HepG2 (cell line): ENCODE measurements at regions of chr1 and their contacts with region 1.

Region 1: DNA sequence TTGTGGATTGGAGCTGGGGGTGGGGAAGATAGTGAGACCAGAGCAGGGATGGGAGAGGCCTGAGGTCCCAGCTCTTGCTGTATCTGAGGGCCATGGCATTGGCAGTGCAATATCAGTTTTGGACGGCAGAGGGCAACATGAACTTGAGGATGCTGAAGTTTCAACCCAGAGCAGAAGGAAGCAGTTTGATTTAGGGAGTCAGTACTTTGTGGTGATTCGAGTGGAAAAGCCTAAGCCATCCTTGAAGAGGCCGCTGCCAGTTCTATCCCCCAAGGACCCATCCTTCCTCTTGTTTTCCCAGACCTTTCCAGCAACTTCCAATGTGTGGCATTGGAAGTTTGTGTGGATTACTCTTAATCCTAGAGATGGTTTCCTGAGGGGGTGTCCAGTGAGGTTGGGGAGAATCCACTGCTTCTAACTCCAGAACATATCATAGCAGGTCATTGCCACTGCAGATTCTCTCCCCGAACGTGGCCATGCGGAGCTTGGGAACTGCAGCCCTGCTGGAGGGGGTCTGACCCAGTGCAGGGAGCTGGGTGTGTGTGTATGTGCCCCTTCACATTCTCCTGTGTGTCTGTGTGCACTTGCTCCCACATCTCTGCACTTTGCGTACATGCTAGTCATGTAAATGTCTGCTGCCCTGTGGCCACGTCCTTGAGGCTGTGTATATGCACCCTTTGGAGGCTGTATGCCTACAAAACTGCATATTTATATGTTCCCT is 24.1 kb downstream of the SLC26A9 start:
- DNase-seq: peak; percentile 52
- ATAC-seq: peak; percentile 85
- H3K4me3 ChIP-seq: no peak overlapping the region
- H3K27ac ChIP-seq: no peak overlapping the region
- H3K4me1 ChIP-seq: 0 out of 2 replicates have a peak, but pooled peaks cover 4% of the 10 kb centered on the region
- H3K27me3 ChIP-seq: peaks cover 2 to 3% of the 10 kb centered on the region in 2 experiments; a peak in 2 of 5 replicates
- CTCF ChIP-seq: peak; percentile 91
- EP300 ChIP-seq: no peak
- POLR2A ChIP-seq: no peak
- RAD21 ChIP-seq: peak; percentile 82

Region 2: GRCh38 chr1:205977402-205978014 is 58.3 kb after region 1 on chr1:
- CTCF ChIA-PET with region 1: interaction called, 59 read pairs
- POLR2A ChIA-PET with region 1: interaction called, 3 read pairs
- in situ Hi-C with region 1: no loop called
- intact Hi-C with region 1: loop called (anchors 1 kb)
- DNase-seq: peak; percentile 67
- ATAC-seq: peak; percentile 89
- H3K4me3 ChIP-seq: no peak overlapping the region
- H3K27ac ChIP-seq: no peak overlapping the region
- H3K4me1 ChIP-seq: peaks cover 13% of the 10 kb centered on the region
- H3K27me3 ChIP-seq: peaks cover 3 to 15% of the 10 kb centered on the region in 2 experiments; a peak in 3 of 5 replicates
- CTCF ChIP-seq: peak; percentile 93
- EP300 ChIP-seq: no peak
- POLR2A ChIP-seq: no peak
- RAD21 ChIP-seq: peak; percentile 88

Region 3: DNA sequence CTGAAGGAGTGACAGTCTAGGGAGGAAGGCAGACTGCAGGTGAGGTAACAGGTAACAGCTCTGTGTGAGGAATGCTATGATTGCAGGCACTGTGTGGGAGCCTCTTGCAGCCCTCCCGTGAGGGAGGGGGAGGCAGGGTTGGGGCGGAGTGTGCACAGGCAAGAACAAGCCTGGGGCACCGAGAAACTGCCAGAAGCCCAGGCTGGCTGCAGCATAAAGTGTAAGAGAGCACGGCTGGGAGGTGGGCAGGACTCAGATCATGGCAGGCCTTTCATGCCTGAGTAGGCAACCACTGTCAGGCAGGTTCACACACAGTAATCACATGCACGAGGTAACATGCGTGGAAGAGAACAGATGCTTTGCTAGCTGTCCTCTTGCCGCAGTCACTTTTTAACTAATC is 122.5 kb after region 1 on chr1:
- CTCF ChIA-PET with region 1: no interaction called
- POLR2A ChIA-PET with region 1: no interaction called
- in situ Hi-C with region 1: no loop called
- intact Hi-C with region 1: no loop called
- DNase-seq: no peak
- ATAC-seq: peak; percentile 82
- H3K4me3 ChIP-seq: peak overlapping the region in 1 of 3 experiments; percentile 6; a peak in 1 of 6 replicates
- H3K27ac ChIP-seq: no peak overlapping the region
- H3K4me1 ChIP-seq: peaks cover 12% of the 10 kb centered on the region
- H3K27me3 ChIP-seq: peaks cover 1 to 7% of the 10 kb centered on the region in 2 experiments; a peak in 3 of 5 replicates
- CTCF ChIP-seq: no peak
- EP300 ChIP-seq: no peak
- POLR2A ChIP-seq: no peak
- RAD21 ChIP-seq: no peak